Body of pancreas (tissue), 4 donors: ENCODE measurements at regions of chr6 and their contacts with region 1.

Region 1: DNA sequence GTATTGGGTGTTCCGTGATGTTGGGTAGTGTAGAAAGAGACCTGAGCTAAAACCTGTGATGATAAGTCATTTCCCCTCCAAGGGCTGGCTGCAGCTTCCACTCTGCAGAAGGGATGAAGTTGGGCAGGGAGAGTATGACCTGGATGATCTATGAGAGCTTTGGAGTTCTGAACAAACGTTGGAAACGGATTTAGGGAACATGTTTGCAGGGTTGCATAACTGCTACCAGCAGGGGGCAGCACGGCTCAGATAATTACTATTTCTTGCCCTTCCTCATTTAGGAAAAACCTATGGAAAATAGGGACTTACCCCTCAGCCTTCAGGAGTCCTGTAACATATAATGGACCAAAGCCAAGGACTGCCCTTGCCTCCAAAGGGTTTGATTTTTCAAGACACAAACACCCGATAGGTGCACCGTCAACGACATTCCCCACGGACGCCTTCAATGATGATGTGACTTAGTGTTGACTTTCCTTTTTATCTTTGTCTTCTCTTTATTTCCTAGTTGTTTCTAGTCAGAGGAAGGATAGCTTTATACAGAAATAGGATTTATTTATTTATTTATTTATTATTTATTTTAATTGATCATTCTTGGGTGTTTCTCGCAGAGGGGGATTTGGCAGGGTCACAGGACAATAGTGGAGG is 164.9 kb upstream of the SASH1 start:
- DNase-seq: peak; percentile 62 to 82 (median 73)
- ATAC-seq: peak; percentile 35
- H3K4me3 ChIP-seq: no peak overlapping the region
- H3K27ac ChIP-seq: no peak overlapping the region
- H3K4me1 ChIP-seq: peaks cover 4% of the 10 kb centered on the region
- H3K27me3 ChIP-seq: no peaks in the 10 kb centered on the region
- CTCF ChIP-seq: peak; percentile 60 to 81 (median 76)
- POLR2A ChIP-seq: no peak

Region 2: GRCh38 chr6:148464319-148465010 is 286.8 kb after region 1 on chr6:
- intact Hi-C with region 1: loop called (anchors 5 kb)
- DNase-seq: peak; percentile 60 to 73 (median 63)
- ATAC-seq: peak; percentile 81
- H3K4me3 ChIP-seq: no peak overlapping the region
- H3K27ac ChIP-seq: no peak overlapping the region
- H3K4me1 ChIP-seq: peaks cover 6% of the 10 kb centered on the region
- H3K27me3 ChIP-seq: no peaks in the 10 kb centered on the region
- CTCF ChIP-seq: peak; percentile 48 to 97 (median 88)
- POLR2A ChIP-seq: no peak